Activated CD8-positive, alpha-beta memory T cell treated with anti-CD3 and anti-CD28 coated beads, Interleukin-2, amount 10 ng/mL, durations not matched to agents 7 days and 5 days (primary cell): ENCODE measurements at regions of chrX and their contacts with region 1.

Region 1: GRCh38 chrX:153539171-153539978 is 21.9 kb downstream of the ATP2B3 start:
- DNase-seq: peak; percentile 64
- ATAC-seq: peak; percentile 82
- H3K4me3 Mint-ChIP-seq: no peak overlapping the region
- H3K27ac Mint-ChIP-seq: no peak overlapping the region
- H3K4me1 Mint-ChIP-seq: no peaks in the 10 kb centered on the region
- H3K27me3 Mint-ChIP-seq: no peaks in the 10 kb centered on the region

Region 2: DNA sequence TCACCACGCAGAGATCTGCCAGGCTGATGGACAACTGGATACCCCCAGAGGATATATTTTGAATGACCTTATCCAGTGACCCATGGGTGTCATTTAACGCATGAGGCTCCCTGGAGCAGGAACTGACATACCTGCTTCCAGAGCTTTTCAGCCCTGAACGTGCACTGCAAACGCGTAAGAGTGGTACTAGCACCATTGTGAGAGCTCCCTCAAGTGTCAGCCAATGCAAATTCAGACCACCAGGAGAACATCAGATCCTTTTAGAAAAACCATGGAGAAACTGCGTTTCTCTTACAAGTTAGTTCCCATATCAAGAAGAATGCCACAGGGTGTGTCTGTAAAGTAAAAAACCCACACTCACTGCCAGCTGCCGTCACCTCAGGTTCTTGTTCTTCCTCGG is 100.8 kb before region 1 on chrX:
- CTCF ChIA-PET with region 1: no interaction called
- DNase-seq: no peak
- ATAC-seq: no peak
- H3K4me3 Mint-ChIP-seq: no peak overlapping the region
- H3K27ac Mint-ChIP-seq: no peak overlapping the region
- H3K4me1 Mint-ChIP-seq: no peaks in the 10 kb centered on the region
- H3K27me3 Mint-ChIP-seq: peaks cover 6% of the 10 kb centered on the region

Region 3: GRCh38 chrX:153554519-153555167 is 15.3 kb after region 1 on chrX:
- CTCF ChIA-PET with region 1: interaction called, 13 read pairs
- DNase-seq: peak; percentile 63
- ATAC-seq: peak; percentile 81
- H3K4me3 Mint-ChIP-seq: no peak overlapping the region
- H3K27ac Mint-ChIP-seq: no peak overlapping the region
- H3K4me1 Mint-ChIP-seq: no peaks in the 10 kb centered on the region
- H3K27me3 Mint-ChIP-seq: no peaks in the 10 kb centered on the region

Region 4: DNA sequence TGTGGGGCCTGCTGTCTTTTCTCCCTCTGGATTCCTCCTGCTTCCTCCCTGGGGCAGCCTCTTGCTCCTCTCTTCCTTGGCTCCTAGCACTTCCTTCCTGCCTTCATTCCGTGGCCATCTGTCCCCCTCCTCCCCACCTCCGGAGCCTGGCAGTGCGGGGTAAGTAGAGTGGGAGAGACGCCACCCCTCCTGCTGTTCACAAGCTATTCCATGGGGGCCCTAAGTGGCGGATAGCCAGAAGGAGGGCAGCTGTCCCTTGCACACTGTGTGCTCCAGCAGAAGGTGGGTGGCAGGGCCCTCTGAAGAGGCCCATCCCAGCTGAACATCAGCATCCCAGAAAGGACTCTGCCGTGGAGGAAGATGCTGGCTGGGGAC is 32.1 kb after region 1 on chrX:
- CTCF ChIA-PET with region 1: no interaction called
- DNase-seq: no peak
- ATAC-seq: no peak
- H3K4me3 Mint-ChIP-seq: no peak overlapping the region
- H3K27ac Mint-ChIP-seq: no peak overlapping the region
- H3K4me1 Mint-ChIP-seq: no peaks in the 10 kb centered on the region
- H3K27me3 Mint-ChIP-seq: no peaks in the 10 kb centered on the region

Region 5: GRCh38 chrX:153646620-153647373 is 107.4 kb after region 1 on chrX and contains the start of gene DUSP9:
- CTCF ChIA-PET with region 1: interaction called, 19 read pairs
- DNase-seq: no peak
- ATAC-seq: peak; percentile 29
- H3K4me3 Mint-ChIP-seq: no peak within 1 kb of the TSS
- H3K27ac Mint-ChIP-seq: peak within 1 kb of the TSS; percentile 8
- H3K4me1 Mint-ChIP-seq: peaks cover 7% of the 10 kb centered on the region
- H3K27me3 Mint-ChIP-seq: peaks cover 43% of the 10 kb centered on the region
- total RNA-seq, gene DUSP9: 0.09 TPM in 1 of 2 experiments, not detected in the other

Region 6: DNA sequence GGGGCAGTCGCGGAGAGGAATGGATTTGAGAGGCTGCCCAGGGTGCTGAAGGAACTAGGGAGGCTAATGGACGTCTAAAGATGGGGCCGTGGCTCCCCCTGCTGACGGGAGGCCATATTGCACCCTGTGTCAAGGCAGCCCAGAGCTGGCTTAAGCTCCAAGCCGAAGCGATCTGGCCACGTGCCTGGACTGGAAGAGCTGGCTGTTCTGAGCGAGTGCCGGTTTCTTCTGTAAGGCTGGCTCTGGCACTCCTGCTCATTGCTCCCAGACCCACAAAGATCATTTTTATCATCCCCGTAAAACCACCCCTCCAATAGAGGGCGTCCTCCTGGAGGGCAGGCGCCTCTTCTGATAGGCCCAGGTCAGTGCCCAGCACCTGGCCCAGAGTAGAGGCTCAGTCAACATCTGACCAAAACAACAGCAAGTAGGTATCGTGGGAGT is 128.6 kb after region 1 on chrX:
- CTCF ChIA-PET with region 1: interaction called, 96 read pairs
- DNase-seq: peak; percentile 81
- ATAC-seq: peak; percentile 81
- H3K4me3 Mint-ChIP-seq: peak overlapping the region; percentile 54
- H3K27ac Mint-ChIP-seq: no peak overlapping the region
- H3K4me1 Mint-ChIP-seq: peaks cover 5% of the 10 kb centered on the region
- H3K27me3 Mint-ChIP-seq: peaks cover 10% of the 10 kb centered on the region